ENCODE measurements at regions of chr17 and their contacts with region 1.

Region 1: GRCh38 chr17:1108861-1109605 is 70.7 kb downstream of the ABR start:
- DNase-seq: peak; percentile 34 to 87 (median 69)
- ATAC-seq: peak; percentile 82
- H3K4me3 ChIP-seq: peak overlapping the region; percentile 68 to 70
- H3K4me3 Mint-ChIP-seq: peak overlapping the region; percentile 84
- H3K27ac ChIP-seq: peak overlapping the region; percentile 60 to 71
- H3K27ac Mint-ChIP-seq: peak overlapping the region; percentile 82
- H3K4me1 ChIP-seq: peaks cover 24% of the 10 kb centered on the region
- H3K4me1 Mint-ChIP-seq: peaks cover 26% of the 10 kb centered on the region
- H3K27me3 ChIP-seq: no peaks in the 10 kb centered on the region
- H3K27me3 Mint-ChIP-seq: no peaks in the 10 kb centered on the region
- CTCF ChIP-seq: no peak

Region 2: DNA sequence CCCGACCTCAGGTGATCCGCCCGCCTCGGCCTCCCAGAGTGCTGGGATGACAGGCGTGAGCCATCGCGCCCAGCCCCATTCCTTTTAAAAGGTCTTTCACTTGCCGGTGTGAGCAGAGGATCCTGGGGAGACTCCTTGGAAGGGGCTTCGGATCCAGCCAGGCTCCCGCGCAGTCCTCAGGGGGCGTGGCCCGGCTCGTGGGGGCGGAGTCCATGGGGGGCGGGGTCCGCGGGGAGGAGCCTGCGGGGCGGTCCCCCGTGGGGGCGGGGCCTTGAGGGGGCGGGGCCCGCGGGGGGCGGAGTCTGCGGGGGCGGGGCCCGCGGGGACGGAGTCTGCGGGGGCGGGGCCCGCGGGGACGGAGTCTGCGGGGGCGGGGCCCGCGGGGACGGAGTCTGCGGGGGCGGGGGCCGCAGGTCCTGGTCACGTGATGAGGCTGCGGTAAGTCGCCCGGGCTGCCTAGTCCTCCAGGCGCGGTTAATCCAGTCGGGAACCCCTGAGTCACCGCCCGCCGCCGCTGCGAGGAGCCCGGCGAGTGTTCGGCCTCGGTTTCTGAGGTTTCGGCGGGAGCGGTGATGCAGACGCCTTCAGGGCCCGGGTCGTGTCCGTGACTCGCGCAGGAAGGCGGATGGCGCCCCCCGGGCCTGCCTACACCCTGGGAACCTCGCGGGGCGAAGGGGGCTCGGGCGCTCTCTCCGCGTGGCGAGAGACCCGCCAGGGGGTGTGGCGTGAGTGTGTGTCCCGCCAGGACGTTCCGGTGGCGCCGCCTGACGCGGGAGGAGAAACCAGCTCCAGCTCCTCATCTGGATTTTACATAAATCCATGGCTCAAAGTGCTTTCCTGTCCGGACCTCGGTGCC is 94.3 kb after region 1 on chr17:
- CTCF ChIA-PET with region 1: no interaction called
- POLR2A ChIA-PET with region 1: interaction called, 3 read pairs
- intact Hi-C with region 1: loop called in 1 of 2 experiments (anchors 5 kb)
- DNase-seq: peak; percentile 30 to 78 (median 52)
- ATAC-seq: peak; percentile 66
- H3K4me3 ChIP-seq: peak overlapping the region in 1 of 2 experiments; percentile 35
- H3K4me3 Mint-ChIP-seq: peak overlapping the region; percentile 5
- H3K27ac ChIP-seq: no peak overlapping the region
- H3K27ac Mint-ChIP-seq: no peak overlapping the region
- H3K4me1 ChIP-seq: peaks cover 48% of the 10 kb centered on the region
- H3K4me1 Mint-ChIP-seq: peaks cover 34% of the 10 kb centered on the region
- H3K27me3 ChIP-seq: no peaks in the 10 kb centered on the region
- H3K27me3 Mint-ChIP-seq: no peaks in the 10 kb centered on the region
- CTCF ChIP-seq: no peak